ENCODE measurements at regions of chr17 and their contacts with region 1.

Region 1: DNA sequence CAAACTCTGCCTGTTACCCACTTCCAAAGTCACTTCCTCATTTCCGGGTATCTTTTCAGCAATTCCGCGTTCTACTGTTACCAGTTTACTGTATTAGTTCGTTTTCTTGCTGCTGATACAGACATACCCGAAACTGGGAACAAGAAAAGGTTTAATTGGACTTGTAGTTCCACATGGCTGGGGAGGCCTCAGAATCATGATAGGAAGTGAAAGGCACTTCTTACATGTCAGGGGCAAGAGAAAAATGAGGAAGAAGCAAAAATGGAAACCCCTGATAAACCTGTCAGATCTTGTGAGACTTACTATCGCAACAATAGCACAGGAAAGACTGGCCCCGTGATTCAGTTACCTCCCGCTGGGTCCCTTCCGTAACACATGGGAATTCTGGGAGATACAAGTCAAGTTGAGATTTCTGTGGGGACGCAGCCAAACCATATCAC is 30.9 kb downstream of the PAFAH1B1 start:
- DNase-seq: peak; percentile 82
- ATAC-seq: peak; percentile 76
- H3K4me3 ChIP-seq: peak overlapping the region in 3 of 5 experiments; percentile 33 to 46 (median 37)
- H3K4me3 Mint-ChIP-seq: peak overlapping the region; percentile 85
- H3K27ac ChIP-seq: peak overlapping the region; percentile 77 to 84
- H3K27ac Mint-ChIP-seq: peak overlapping the region; percentile 84
- H3K4me1 ChIP-seq: peaks cover 36 to 44% of the 10 kb centered on the region in 2 donors
- H3K4me1 Mint-ChIP-seq: peaks cover 71% of the 10 kb centered on the region
- H3K27me3 ChIP-seq: no peaks in the 10 kb centered on the region
- H3K27me3 Mint-ChIP-seq: no peaks in the 10 kb centered on the region
- CTCF ChIP-seq: no peak

Region 2: GRCh38 chr17:2672026-2672425 is 47.7 kb after region 1 on chr17:
- CTCF ChIA-PET with region 1: no interaction called
- POLR2A ChIA-PET with region 1: no interaction called
- intact Hi-C with region 1: loop called (anchors 10 kb)
- DNase-seq: no peak
- ATAC-seq: no peak
- H3K4me3 ChIP-seq: no peak overlapping the region
- H3K4me3 Mint-ChIP-seq: no peak overlapping the region
- H3K27ac ChIP-seq: peak overlapping the region in 1 of 2 donors; percentile 9
- H3K27ac Mint-ChIP-seq: no peak overlapping the region
- H3K4me1 ChIP-seq: no peaks in the 10 kb centered on the region
- H3K4me1 Mint-ChIP-seq: peaks cover 3% of the 10 kb centered on the region
- H3K27me3 ChIP-seq: no peaks in the 10 kb centered on the region
- H3K27me3 Mint-ChIP-seq: no peaks in the 10 kb centered on the region
- CTCF ChIP-seq: no peak